ENCODE measurements at regions of chr10 and their contacts with region 1.

Region 1: GRCh38 chr10:44925224-44925623 is 14.1 kb downstream of the TMEM72 start:
- DNase-seq: peak; percentile 45 to 64 (median 52)
- ATAC-seq: peak; percentile 81
- H3K4me3 ChIP-seq: no peak overlapping the region
- H3K27ac ChIP-seq: no peak overlapping the region
- H3K4me1 ChIP-seq: peaks cover 0 to 5% of the 10 kb centered on the region in 2 experiments; a peak in 1 of 5 replicates
- H3K27me3 ChIP-seq: peaks cover 0 to 52% of the 10 kb centered on the region in 2 experiments; a peak in 3 of 5 replicates
- CTCF ChIP-seq: peak; percentile 65 to 73 (median 70)
- EP300 ChIP-seq: no peak
- POLR2A ChIP-seq: no peak
- RAD21 ChIP-seq: peak; percentile 77 to 79

Region 2: DNA sequence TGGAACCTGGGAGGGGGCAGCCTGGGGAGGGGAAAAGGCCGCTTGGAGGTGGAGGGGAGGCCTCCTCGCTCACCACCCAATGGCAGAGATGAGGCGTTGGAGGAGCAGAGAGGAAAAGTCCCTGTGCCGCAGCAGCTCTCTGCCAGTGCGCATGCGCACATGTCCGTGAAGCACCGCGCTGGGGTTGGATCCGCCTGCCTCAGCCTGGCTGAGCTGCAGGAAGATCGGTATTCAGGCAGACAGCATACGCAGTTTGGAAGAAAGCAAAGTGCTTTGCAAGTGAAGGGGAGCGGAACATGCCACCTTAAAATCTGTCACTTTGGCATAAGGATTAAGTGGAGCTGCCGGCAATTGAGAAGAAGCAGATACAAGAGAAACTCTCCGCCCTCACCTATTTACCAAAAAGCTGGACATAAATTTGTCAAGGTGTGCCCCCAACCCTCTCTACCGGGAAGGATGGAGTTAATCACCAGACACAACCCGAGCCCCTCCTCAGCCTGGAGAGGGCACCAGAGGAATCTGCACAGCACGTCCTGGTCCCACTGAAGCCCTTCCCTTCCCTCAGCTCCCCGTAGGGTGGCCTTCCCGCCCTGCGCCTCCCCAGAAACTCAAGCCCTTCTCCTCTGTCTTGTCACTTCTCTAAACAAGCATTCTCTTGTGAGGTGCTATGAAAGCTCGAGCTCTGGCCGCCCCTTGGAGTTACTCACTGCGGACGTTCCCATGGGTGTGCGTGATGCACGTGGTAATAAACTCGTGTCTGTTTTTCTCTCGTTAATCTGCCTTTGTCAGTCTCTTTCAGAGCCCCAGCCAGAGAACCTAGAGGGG is 46.3 kb before region 1 on chr10:
- CTCF ChIA-PET with region 1: no interaction called
- POLR2A ChIA-PET with region 1: no interaction called
- in situ Hi-C with region 1: no loop called
- intact Hi-C with region 1: loop called (anchors 2 kb)
- DNase-seq: peak; percentile 51 to 73 (median 68)
- ATAC-seq: peak; percentile 74
- H3K4me3 ChIP-seq: no peak overlapping the region
- H3K27ac ChIP-seq: no peak overlapping the region; the same call in 2 of the 3 replicates
- H3K4me1 ChIP-seq: peaks cover 0 to 4% of the 10 kb centered on the region in 2 experiments; a peak in 2 of 5 replicates
- H3K27me3 ChIP-seq: peaks cover 30 to 74% of the 10 kb centered on the region in 2 experiments
- CTCF ChIP-seq: peak in 2 of 3 experiments; percentile 20 to 32; a peak in 2 of 6 replicates
- EP300 ChIP-seq: no peak
- POLR2A ChIP-seq: no peak
- RAD21 ChIP-seq: peak; percentile 31 to 47; a peak in 3 of 4 replicates

Measured in K562 (cell line).